Activated CD4-positive, alpha-beta T cell treated with anti-CD3 and anti-CD28 coated beads, Interleukin-2, amount 10 ng/mL, durations not matched to agents 7 days and 5 days (primary cell): ENCODE measurements at regions of chr3 and their contacts with region 1.

Region 1: GRCh38 chr3:9909221-9910013 is 6.8 kb downstream of the IL17RE start:
- DNase-seq: no peak
- H3K4me3 Mint-ChIP-seq: no peak overlapping the region
- H3K27ac Mint-ChIP-seq: no peak overlapping the region
- H3K4me1 Mint-ChIP-seq: peaks cover 9% of the 10 kb centered on the region
- H3K27me3 Mint-ChIP-seq: peaks cover 3% of the 10 kb centered on the region

Region 2: DNA sequence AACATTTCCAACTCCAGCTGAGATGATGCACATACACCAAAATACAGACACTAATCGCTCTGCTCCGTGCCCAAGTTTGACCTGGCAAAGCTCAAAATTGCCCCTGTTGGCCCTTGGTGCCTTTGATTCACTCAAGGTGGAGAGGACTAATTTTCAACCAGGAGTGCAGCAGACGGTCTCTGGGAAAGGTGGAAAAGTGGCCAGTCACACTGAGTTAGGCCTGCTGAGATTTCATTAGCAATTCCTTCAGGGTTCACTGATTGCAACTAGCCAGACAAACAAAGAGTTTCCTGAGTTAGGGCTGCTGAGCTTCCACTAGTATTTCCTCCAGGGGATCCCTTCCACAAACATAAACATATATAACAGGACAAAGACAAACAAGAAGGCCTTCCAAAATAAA is 327.1 kb before region 1 on chr3:
- CTCF ChIA-PET with region 1: no interaction called
- POLR2A ChIA-PET with region 1: no interaction called
- DNase-seq: no peak
- H3K4me3 Mint-ChIP-seq: no peak overlapping the region
- H3K27ac Mint-ChIP-seq: peak overlapping the region; percentile 25
- H3K4me1 Mint-ChIP-seq: no peaks in the 10 kb centered on the region
- H3K27me3 Mint-ChIP-seq: no peaks in the 10 kb centered on the region

Region 3: GRCh38 chr3:9891072-9891622 is 18.3 kb before region 1 on chr3:
- CTCF ChIA-PET with region 1: no interaction called
- POLR2A ChIA-PET with region 1: interaction called, 13 read pairs
- DNase-seq: no peak
- H3K4me3 Mint-ChIP-seq: peak overlapping the region; percentile 99
- H3K27ac Mint-ChIP-seq: peak overlapping the region; percentile 98
- H3K4me1 Mint-ChIP-seq: peaks cover 43% of the 10 kb centered on the region
- H3K27me3 Mint-ChIP-seq: no peaks in the 10 kb centered on the region